ENCODE measurements at regions of chr13 and their contacts with region 1.

Region 1: GRCh38 chr13:38883783-38884182 is 106.8 kb downstream of the STOML3 start:
- DNase-seq: no peak
- ATAC-seq: no peak
- H3K4me3 Mint-ChIP-seq: no peak overlapping the region
- H3K27ac Mint-ChIP-seq: no peak overlapping the region
- H3K4me1 Mint-ChIP-seq: no peaks in the 10 kb centered on the region
- H3K27me3 Mint-ChIP-seq: peaks cover 10% of the 10 kb centered on the region

Region 2: DNA sequence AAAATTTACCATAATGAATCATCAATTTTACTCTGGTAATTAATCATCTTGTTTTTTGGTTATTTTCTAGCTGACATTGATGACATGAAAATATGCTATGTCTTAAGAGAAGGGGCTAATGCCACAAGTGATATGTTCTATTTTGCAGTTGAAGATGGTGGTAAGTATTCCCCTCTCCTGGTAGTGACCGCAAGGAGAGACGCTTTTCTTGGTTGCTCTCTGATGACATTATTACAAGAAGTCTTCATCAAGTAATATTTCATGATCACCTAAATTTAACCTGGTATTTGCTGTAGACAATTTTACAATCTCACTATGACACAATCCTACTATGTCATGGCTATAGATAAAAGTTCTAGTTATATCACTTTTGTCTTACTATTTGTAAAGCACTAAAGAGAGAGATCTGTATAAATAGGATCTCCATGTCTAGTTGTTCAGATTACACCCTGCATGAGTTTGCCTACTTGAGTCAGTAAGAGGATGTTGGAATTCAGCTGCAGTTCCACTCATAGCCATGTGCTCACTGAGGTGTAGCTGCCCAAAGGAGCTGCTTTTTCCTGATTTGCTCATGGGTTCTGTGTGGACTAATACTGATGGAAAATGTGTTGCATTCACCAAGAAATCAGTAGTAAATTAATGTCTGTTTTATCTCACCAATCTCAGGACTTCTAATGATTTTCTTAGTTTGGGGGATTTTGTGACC is 186.0 kb before region 1 on chr13:
- CTCF ChIA-PET with region 1: no interaction called
- POLR2A ChIA-PET with region 1: no interaction called
- DNase-seq: no peak
- ATAC-seq: no peak
- H3K4me3 Mint-ChIP-seq: no peak overlapping the region
- H3K27ac Mint-ChIP-seq: no peak overlapping the region
- H3K4me1 Mint-ChIP-seq: no peaks in the 10 kb centered on the region
- H3K27me3 Mint-ChIP-seq: no peaks in the 10 kb centered on the region

Region 3: DNA sequence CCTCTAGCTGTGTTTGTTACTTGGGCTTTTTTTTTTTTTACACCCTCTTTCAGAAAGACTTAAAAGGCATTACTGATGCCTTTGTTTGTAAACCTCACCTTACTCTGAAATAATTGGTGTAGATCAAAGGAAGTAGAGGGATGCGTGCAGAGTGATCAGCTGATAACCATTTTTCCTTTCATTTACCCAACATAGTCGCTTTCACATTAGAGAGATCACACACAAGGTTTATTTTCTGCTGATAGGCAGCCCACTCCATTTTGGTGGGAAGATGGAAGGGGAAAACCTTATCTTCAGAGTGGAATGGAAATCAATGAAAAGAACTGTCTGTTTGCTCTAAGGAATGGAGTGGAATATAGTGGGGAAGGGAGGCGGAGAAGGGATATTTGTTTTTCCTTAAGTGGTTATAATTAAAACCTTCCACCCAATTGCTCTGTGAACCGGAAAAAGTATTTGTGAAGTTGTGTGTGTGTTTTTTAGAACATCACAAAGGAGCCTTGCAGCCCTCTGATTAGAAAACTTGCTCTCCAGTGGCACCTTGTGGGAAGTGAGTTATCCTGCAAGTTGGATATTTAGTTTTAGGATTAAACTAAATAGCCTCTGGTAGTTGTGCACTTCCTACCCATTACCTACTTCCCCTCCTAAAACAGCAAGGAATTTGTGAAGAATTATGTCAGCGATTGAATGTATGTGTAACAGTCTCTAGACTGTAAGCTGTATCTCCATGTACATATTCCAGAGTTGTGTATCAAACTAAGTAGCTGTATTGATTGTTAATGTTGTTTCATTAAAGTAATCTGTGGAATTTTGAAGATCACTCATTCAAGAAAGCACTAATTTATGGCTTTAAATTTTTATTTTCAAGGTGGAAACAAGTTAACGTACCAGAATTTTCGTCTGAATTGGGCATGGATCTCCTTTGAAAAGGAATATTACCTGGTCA is 120.1 kb before region 1 on chr13:
- CTCF ChIA-PET with region 1: no interaction called
- POLR2A ChIA-PET with region 1: no interaction called
- DNase-seq: no peak
- ATAC-seq: no peak
- H3K4me3 Mint-ChIP-seq: no peak overlapping the region
- H3K27ac Mint-ChIP-seq: no peak overlapping the region
- H3K4me1 Mint-ChIP-seq: no peaks in the 10 kb centered on the region
- H3K27me3 Mint-ChIP-seq: no peaks in the 10 kb centered on the region

Region 4: DNA sequence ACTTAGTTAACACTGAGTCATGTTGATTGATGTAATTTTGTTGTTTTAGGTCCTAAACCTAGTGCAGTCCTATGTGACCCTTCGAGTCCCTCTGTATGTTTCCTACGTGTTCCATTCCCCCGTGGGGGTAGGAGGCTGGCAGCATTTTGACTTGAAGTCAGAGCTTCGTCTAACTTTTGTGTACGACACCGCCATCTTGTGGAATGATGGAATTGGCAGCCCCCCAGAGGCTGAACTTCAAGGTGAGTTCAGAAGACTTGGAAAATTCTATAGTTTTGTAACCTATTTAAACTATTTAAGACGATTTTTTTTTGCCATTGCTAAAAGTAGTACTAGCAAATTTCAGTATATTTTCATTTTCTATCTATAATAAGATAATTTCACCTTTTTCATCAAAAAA is 11.1 kb before region 1 on chr13:
- CTCF ChIA-PET with region 1: interaction called, 17 read pairs
- POLR2A ChIA-PET with region 1: no interaction called
- DNase-seq: peak; percentile 50
- ATAC-seq: no peak
- H3K4me3 Mint-ChIP-seq: no peak overlapping the region
- H3K27ac Mint-ChIP-seq: no peak overlapping the region
- H3K4me1 Mint-ChIP-seq: no peaks in the 10 kb centered on the region
- H3K27me3 Mint-ChIP-seq: peaks cover 7% of the 10 kb centered on the region

Region 5: GRCh38 chr13:38898481-38898880 is 14.7 kb after region 1 on chr13:
- CTCF ChIA-PET with region 1: no interaction called
- POLR2A ChIA-PET with region 1: no interaction called
- DNase-seq: no peak
- ATAC-seq: no peak
- H3K4me3 Mint-ChIP-seq: no peak overlapping the region
- H3K27ac Mint-ChIP-seq: no peak overlapping the region
- H3K4me1 Mint-ChIP-seq: no peaks in the 10 kb centered on the region
- H3K27me3 Mint-ChIP-seq: no peaks in the 10 kb centered on the region